ENCODE measurements at regions of chrX and their contacts with region 1.

Region 1: GRCh38 chrX:97310373-97310772 is 426.7 kb downstream of the RPA4 start:
- DNase-seq: peak in 1 of 2 experiments; percentile 29
- H3K4me3 ChIP-seq: peak overlapping the region; percentile 39 to 91 (median 62)
- H3K27ac ChIP-seq: peak overlapping the region; percentile 82; the same call in 1 of the 2 replicates
- H3K4me1 ChIP-seq: no peaks in the 10 kb centered on the region; a peak in 1 of 7 replicates
- H3K27me3 ChIP-seq: no peaks in the 10 kb centered on the region
- CTCF ChIP-seq: no peak
- EP300 ChIP-seq: no peak
- POLR2A ChIP-seq: peak; percentile 64 to 65; a peak in 2 of 3 replicates
- RAD21 ChIP-seq: no peak

Region 2: GRCh38 chrX:97290199-97290598 is 20.2 kb before region 1 on chrX:
- CTCF ChIA-PET with region 1: no interaction called
- POLR2A ChIA-PET with region 1: interaction called, 14 read pairs
- DNase-seq: peak in 1 of 2 experiments; percentile 2
- H3K4me3 ChIP-seq: no peak overlapping the region
- H3K27ac ChIP-seq: no peak overlapping the region
- H3K4me1 ChIP-seq: peaks cover 0 to 6% (median 0%) of the 10 kb centered on the region in 4 experiments; a peak in 3 of 7 replicates
- H3K27me3 ChIP-seq: no peaks in the 10 kb centered on the region
- CTCF ChIP-seq: no peak
- EP300 ChIP-seq: no peak
- POLR2A ChIP-seq: no peak
- RAD21 ChIP-seq: no peak

Region 3: GRCh38 chrX:97295954-97296353 is 14.4 kb before region 1 on chrX:
- CTCF ChIA-PET with region 1: interaction called, 3 read pairs
- POLR2A ChIA-PET with region 1: interaction called, 14 read pairs
- DNase-seq: no peak
- H3K4me3 ChIP-seq: no peak overlapping the region
- H3K27ac ChIP-seq: no peak overlapping the region
- H3K4me1 ChIP-seq: no peaks in the 10 kb centered on the region
- H3K27me3 ChIP-seq: no peaks in the 10 kb centered on the region
- CTCF ChIP-seq: no peak
- EP300 ChIP-seq: no peak
- POLR2A ChIP-seq: no peak
- RAD21 ChIP-seq: no peak

Region 4: DNA sequence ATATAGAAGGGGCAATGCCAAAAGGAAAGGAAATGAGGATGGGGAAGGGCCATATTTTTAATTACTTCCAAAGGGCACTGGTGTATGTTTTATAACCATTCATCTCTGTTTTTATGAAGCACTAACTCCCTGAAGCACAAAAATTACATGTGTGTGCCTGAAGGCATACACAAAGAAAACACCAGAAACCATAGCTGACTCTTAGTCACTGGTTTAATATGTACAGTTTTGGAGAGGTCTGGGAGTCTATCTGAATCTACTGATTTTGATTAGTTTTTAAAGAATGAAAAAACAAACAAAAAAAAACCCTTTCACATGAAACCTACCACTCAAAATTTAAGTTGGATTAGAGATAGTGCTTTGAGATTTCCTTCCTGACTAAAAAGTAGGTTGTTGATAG is 12.0 kb after region 1 on chrX:
- CTCF ChIA-PET with region 1: interaction called, 5 read pairs
- POLR2A ChIA-PET with region 1: interaction called, 13 read pairs
- DNase-seq: no peak
- H3K4me3 ChIP-seq: no peak overlapping the region
- H3K27ac ChIP-seq: no peak overlapping the region
- H3K4me1 ChIP-seq: no peaks in the 10 kb centered on the region
- H3K27me3 ChIP-seq: no peaks in the 10 kb centered on the region
- CTCF ChIP-seq: no peak
- EP300 ChIP-seq: no peak
- POLR2A ChIP-seq: no peak
- RAD21 ChIP-seq: no peak

Region 5: DNA sequence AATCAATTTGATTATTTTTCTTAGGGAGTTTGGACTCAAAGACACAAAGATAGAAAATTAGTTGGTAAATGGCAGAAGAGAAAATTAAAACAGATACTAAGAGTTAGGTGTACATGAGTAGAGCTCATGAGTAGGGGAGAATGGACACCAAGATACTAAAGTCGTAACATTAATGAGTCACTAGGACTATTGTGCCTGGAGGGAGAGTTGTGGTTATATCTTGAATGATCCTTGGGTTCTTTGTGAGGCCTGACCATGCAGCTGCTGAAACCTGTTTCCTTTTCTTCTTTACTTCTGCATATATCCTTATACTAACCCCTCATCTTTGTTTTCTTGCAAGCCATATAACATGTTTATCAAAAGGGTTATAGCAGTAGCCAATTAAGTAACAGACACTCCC is 106.1 kb after region 1 on chrX:
- CTCF ChIA-PET with region 1: no interaction called
- POLR2A ChIA-PET with region 1: no interaction called
- DNase-seq: no peak
- H3K4me3 ChIP-seq: no peak overlapping the region
- H3K27ac ChIP-seq: no peak overlapping the region
- H3K4me1 ChIP-seq: no peaks in the 10 kb centered on the region
- H3K27me3 ChIP-seq: no peaks in the 10 kb centered on the region
- CTCF ChIP-seq: no peak
- EP300 ChIP-seq: no peak
- POLR2A ChIP-seq: no peak
- RAD21 ChIP-seq: no peak

Measured in H1 (cell line).